ENCODE measurements at regions of chr16 and their contacts with region 1.

Region 1: GRCh38 chr16:69123910-69124309 is 8.5 kb downstream of the CHTF8 start:
- DNase-seq: peak in 3 of 5 donors; percentile 44 to 67 (median 51)
- ATAC-seq: peak in 2 of 4 donors; percentile 41 to 45
- H3K4me3 ChIP-seq: no peak overlapping the region
- H3K27ac ChIP-seq: no peak overlapping the region
- H3K4me1 ChIP-seq: peaks cover 0 to 19% (median 5%) of the 10 kb centered on the region in 12 donors
- H3K27me3 ChIP-seq: no peaks in the 10 kb centered on the region
- CTCF ChIP-seq: peak; percentile 54 to 79 (median 71)
- POLR2A ChIP-seq: no peak

Region 2: DNA sequence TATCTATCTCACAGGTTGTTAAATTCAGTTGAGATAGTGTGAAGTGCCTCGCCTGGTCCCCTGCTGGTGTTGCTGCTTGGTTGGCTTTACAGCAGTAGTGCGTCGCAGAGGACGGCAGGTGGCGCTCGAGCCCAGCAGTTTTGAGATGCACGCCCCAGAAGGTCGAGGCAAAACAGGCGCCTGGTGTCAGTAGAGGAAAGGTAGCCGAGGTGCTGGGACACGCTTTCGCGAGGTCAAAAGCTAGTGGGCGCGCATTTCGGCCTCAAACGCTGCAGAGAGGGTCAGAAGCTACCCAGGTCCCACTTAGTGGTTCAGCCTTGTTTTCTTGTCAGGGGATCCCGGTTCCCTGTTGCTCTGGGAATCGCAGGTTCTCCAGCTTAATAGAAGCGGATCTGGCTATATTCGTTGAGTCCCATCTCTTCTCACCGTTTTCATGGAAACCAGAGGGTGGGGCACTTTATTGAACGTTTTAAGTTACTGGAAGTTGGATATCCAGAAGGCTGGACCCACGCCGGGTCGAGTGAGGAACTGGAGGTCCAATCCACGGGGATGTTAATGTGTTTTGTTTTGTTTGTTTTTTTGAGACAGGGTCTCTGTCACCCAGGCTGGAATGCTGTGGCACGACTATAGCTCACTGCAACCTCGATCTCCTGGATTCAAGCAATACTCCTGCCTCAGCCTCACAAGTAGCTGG is 595.1 kb before region 1 on chr16:
- intact Hi-C with region 1: loop called in 7 of 10 experiments (anchors 5 to 10 kb)
- DNase-seq: peak; percentile 80 to 90 (median 84)
- ATAC-seq: peak; percentile 84 to 94 (median 92)
- H3K4me3 ChIP-seq: peak overlapping the region in 6 of 12 donors; percentile 3 to 38 (median 22)
- H3K27ac ChIP-seq: no peak overlapping the region
- H3K4me1 ChIP-seq: peaks cover 0 to 23% (median 16%) of the 10 kb centered on the region in 12 donors
- H3K27me3 ChIP-seq: no peaks in the 10 kb centered on the region
- CTCF ChIP-seq: peak; percentile 88 to 96 (median 92)
- POLR2A ChIP-seq: no peak

Region 3: DNA sequence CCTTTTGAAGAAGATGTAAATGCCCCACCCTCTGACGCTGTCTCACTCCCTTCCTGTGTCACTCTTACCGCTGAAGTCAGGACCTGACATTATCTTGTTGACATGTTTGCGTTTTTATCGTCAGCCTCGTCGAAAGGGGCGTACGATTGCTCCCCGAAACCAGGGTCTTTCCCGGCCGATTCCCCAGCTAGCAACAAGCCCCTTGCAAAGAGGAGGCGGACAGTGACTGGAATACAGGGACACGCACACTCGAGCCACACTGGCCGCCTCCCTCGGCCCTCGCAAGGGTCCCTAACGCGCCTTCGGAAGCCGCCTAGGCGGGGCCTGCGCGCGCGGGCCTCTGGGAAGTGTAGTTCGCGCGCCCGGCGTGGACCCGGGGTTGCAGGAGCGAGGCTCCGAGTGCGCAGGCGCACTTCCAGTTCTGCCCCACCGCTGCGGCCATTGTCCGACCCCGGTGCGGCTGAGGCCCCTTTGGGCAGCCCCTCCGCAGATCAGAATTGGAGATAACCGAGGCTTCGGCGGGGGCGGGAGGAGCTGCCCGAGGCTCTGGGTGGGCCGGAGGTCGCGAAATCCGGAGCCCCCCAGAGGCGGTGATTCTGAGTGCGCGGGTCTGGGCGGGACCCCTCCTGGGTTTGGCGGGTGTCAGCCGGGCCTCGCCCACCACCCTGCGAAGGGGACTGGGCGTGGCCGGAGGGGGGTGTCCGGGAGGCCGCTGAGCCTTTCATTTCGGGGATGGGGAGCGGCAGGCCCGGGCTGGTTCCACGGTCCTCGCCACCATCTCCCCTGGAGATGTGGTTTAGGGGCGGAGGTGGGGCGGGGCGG is 584.8 kb before region 1 on chr16 and contains the start of gene ZFP90:
- intact Hi-C with region 1: loop called in 2 of 10 experiments (anchors 10 kb)
- DNase-seq: peak; percentile 88 to 95 (median 91)
- ATAC-seq: peak; percentile 96 to 100 (median 100)
- H3K4me3 ChIP-seq: peak within 1 kb of the TSS; percentile 71 to 100 (median 89)
- H3K27ac ChIP-seq: peak within 1 kb of the TSS; percentile 28 to 88 (median 78)
- H3K4me1 ChIP-seq: peaks cover 0 to 13% (median 6%) of the 10 kb centered on the region in 12 donors
- H3K27me3 ChIP-seq: no peaks in the 10 kb centered on the region
- CTCF ChIP-seq: peak in 1 of 12 donors; percentile 19
- POLR2A ChIP-seq: peak in 1 of 2 donors; percentile 71
- total RNA-seq, gene ZFP90: 6.9 to 18.1 (median 12.0) TPM

Region 4: GRCh38 chr16:68704232-68704867 is 419.6 kb before region 1 on chr16:
- intact Hi-C with region 1: loop called in 3 of 10 experiments (anchors 10 kb)
- DNase-seq: peak; percentile 42 to 67 (median 46)
- ATAC-seq: peak; percentile 60 to 79 (median 78)
- H3K4me3 ChIP-seq: no peak overlapping the region
- H3K27ac ChIP-seq: no peak overlapping the region
- H3K4me1 ChIP-seq: no peaks in the 10 kb centered on the region
- H3K27me3 ChIP-seq: peaks cover 0 to 3% (median 0%) of the 10 kb centered on the region in 9 donors
- CTCF ChIP-seq: peak in 11 of 12 donors; percentile 29 to 62 (median 46)
- POLR2A ChIP-seq: no peak

Region 5: DNA sequence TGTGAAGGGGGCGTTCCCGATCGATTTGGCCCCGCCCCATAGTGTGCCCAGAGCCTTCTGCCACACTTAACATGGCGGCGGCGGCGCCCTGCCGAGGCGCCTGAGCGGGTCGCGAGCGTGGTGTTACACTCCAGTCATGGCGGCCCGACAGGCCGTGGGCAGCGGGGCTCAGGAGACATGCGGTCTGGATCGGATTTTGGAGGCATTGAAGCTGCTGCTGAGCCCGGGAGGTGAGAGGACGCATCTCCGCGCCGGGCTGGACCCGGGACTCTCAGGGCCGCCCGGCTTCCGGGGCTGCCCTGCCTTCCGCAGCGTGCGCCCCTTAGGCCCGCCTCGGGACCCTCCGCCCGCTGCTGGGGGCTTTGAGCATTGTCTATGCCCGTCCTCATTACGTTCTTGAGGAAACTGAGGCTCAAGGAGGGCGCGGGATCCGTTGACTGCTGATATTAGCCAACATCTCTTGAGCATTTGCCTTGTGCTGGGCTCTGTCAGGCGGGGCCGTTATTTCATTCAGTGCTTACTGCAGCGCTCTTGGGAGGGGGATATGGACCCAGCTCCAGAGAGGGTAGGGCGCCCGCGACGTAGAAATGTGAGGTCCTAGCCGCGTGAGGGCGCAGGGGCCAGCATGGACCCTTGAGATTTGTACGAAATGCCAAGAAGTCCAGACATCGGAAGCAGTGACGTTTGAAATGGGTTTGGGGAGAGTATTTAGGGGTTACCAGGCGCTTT is 280.3 kb before region 1 on chr16 and contains the start of gene TANGO6:
- intact Hi-C with region 1: loop called in 9 of 10 experiments (anchors 2 to 5 kb)
- DNase-seq: peak; percentile 84 to 93 (median 89)
- ATAC-seq: peak; percentile 93 to 99 (median 99)
- H3K4me3 ChIP-seq: peak within 1 kb of the TSS; percentile 68 to 99 (median 84)
- H3K27ac ChIP-seq: peak within 1 kb of the TSS; percentile 68 to 93 (median 86)
- H3K4me1 ChIP-seq: peaks cover 0 to 20% (median 7%) of the 10 kb centered on the region in 12 donors
- H3K27me3 ChIP-seq: no peaks in the 10 kb centered on the region
- CTCF ChIP-seq: peak in 2 of 12 donors; percentile 17 to 21
- POLR2A ChIP-seq: peak in 1 of 2 donors; percentile 59
- total RNA-seq, gene TANGO6: 5.5 to 14.1 (median 8.9) TPM

Region 6: DNA sequence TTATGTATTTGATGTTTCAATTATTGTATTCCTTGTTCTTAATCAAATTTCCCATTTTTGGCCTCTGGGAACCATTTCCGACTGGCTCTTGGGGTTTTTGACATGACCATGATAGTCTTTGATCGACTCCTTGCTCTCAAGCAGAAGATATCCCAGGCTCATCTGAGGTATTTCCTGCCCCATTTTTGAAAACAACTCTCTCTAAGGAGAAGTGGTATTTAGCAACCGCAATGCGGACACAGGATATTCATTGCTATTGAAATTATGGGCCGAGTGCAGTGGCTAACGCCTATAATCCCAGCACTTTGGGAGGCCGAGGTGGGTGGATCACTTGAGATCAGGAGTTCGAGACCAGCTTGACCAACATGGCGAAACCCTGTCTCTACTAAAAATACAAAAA is 275.1 kb before region 1 on chr16:
- intact Hi-C with region 1: loop called in 9 of 10 experiments (anchors 2 to 5 kb)
- DNase-seq: no peak
- ATAC-seq: no peak
- H3K4me3 ChIP-seq: no peak overlapping the region
- H3K27ac ChIP-seq: no peak overlapping the region
- H3K4me1 ChIP-seq: peaks cover 0 to 15% (median 5%) of the 10 kb centered on the region in 12 donors
- H3K27me3 ChIP-seq: no peaks in the 10 kb centered on the region
- CTCF ChIP-seq: no peak
- POLR2A ChIP-seq: no peak

Region 7: DNA sequence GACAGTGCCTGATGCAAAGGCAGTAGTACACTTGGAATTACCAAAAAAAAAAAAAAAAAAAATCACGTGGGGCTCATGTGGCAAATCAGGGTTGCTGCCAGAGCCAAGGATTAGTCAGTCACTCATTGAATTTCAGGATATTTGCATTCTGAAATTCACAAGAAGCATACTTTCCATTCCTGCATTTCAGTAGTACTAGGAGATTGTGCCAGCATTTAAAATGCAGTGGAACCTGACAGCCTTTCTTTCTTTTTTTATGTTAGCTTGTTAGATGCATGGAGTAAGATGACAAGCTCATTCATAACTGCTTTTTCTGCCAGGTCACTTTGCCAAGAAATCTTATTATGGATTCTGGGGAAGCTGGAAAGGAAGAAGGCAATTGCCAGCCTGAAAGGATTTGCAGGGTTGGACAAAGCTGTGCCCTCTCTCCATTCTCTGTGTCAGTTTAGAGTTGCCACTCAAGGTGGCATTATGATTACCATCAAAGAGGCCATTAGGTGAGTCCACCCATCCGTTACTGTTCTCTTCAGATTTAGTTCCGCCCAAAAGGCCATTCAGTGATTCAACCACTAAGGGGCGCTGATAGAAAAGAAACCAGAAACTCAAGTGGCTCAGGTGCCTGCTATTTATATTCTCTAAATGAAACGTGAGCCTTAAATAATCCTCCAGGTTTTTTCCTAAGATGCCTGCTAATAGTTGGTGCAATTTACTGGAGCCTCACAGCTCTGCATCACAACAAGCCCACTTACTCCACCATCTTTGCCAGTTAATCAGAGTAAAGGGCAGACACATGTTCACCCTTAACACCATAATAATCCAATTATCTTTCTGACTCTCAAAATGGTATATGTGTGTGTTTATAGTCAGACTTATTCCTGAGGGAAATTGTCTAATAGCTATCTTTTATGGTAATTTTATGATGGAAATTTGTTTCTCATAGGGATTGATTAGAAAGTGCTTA is 221.6 kb before region 1 on chr16:
- intact Hi-C with region 1: loop called (anchors 1 to 5 kb)
- DNase-seq: peak in 1 of 5 donors; percentile 7
- ATAC-seq: peak in 3 of 4 donors; percentile 52 to 60 (median 54)
- H3K4me3 ChIP-seq: no peak overlapping the region
- H3K27ac ChIP-seq: no peak overlapping the region
- H3K4me1 ChIP-seq: peaks cover 0 to 6% (median 0%) of the 10 kb centered on the region in 12 donors
- H3K27me3 ChIP-seq: no peaks in the 10 kb centered on the region
- CTCF ChIP-seq: peak; percentile 49 to 73 (median 62)
- POLR2A ChIP-seq: no peak

Region 8: DNA sequence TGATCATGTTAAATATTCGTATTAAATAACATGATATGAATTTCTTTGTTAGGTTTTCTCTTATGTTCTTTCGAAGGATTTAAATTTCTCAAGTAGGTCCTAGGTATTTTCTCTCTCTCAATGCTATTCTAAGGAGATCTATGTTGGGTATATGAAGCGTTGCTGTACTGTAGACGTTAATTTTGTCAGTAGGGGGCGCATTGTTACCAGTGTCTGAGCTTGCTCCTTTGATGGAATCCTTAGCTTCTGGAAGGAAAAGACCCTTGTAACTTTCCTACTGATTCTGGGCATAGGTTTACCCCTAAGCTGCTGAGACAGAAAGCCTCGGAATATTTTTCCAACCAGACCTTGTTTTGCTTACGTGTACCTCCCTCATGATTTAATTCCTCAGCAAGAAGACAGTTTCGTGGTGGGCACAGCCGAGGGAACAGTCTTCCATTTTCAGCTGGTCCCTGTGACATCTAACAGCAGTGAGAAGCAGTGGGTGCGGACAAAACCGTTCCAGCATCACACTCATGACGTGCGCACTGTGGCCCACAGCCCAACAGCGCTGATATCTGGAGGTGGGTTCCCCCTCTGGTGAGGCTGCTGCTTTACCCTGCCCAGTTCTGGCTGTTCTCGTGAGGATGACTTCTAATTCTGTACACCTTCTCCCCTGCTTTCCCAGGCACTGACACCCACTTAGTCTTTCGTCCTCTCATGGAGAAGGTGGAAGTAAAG is 26.4 kb after region 1 on chr16:
- intact Hi-C with region 1: no loop called
- DNase-seq: peak in 2 of 5 donors; percentile 46 to 52
- ATAC-seq: peak in 3 of 4 donors; percentile 82 to 84 (median 83)
- H3K4me3 ChIP-seq: no peak overlapping the region
- H3K27ac ChIP-seq: no peak overlapping the region
- H3K4me1 ChIP-seq: no peaks in the 10 kb centered on the region
- H3K27me3 ChIP-seq: no peaks in the 10 kb centered on the region
- CTCF ChIP-seq: peak; percentile 63 to 87 (median 78)
- POLR2A ChIP-seq: no peak

Measured in heart left ventricle (tissue), 16 donors.